ENCODE measurements at regions of chr2 and their contacts with region 1.

Region 1: GRCh38 chr2:102235491-102235890 is 48.7 kb downstream of the IL1RL2 start:
- DNase-seq: no peak
- H3K4me3 ChIP-seq: no peak overlapping the region
- H3K27ac ChIP-seq: no peak overlapping the region
- H3K4me1 ChIP-seq: peaks cover 2% of the 10 kb centered on the region
- H3K27me3 ChIP-seq: no peaks in the 10 kb centered on the region
- CTCF ChIP-seq: peak; percentile 50 to 54

Region 2: DNA sequence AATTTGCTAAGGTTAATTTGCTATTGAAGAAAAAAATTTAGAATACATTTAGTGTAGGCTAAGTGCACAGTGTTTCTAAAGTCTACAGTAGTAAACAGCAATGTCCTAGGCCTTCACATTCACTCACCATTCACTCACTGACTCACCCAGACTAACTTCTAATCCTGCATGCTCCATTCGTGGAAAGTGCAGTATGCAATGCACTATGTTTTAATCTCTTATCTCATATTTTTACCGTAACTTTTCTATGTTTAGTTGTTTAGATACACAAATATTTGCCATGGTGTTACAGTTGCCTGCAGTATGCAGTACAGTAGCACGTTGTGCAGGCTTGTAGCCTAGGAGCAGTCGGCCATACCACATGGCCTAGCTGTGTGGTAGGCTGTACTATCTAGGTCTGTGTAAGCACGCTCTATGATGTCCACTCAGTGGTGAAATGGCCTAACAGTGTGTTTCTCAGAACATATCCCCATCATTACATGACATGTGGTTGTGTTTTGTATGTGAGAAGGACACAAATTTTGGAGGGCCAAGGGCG is 742.5 kb before region 1 on chr2:
- CTCF ChIA-PET with region 1: no interaction called
- dilution Hi-C with region 1: no loop called
- in situ Hi-C with region 1: no loop called
- intact Hi-C with region 1: no loop called
- DNase-seq: no peak
- H3K4me3 ChIP-seq: no peak overlapping the region
- H3K27ac ChIP-seq: no peak overlapping the region
- H3K4me1 ChIP-seq: no peaks in the 10 kb centered on the region
- H3K27me3 ChIP-seq: no peaks in the 10 kb centered on the region
- CTCF ChIP-seq: no peak

Region 3: DNA sequence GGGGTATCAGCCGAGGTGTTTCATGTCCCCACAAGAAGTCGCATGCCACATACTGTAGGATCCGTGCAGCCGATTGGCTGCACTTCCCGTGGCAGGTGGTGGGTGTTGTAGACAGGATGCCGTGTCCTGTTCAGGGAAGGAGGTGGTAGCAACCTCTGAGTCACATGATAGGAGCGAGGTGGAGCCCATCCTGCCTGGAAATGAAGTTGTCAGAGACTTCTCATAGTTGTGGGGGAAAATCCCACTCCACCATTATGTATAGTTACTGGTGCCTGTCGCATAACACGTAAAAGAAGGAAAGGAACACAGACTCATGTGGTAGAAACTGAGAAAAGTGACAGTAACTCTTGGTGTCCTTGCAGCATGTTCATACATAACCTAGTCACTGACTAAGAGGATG is 335.1 kb before region 1 on chr2:
- CTCF ChIA-PET with region 1: no interaction called
- dilution Hi-C with region 1: loop called (anchors 5 kb)
- in situ Hi-C with region 1: no loop called
- intact Hi-C with region 1: no loop called
- DNase-seq: no peak
- H3K4me3 ChIP-seq: no peak overlapping the region
- H3K27ac ChIP-seq: peak overlapping the region; percentile 60
- H3K4me1 ChIP-seq: peaks cover 28% of the 10 kb centered on the region
- H3K27me3 ChIP-seq: no peaks in the 10 kb centered on the region
- CTCF ChIP-seq: no peak

Region 4: DNA sequence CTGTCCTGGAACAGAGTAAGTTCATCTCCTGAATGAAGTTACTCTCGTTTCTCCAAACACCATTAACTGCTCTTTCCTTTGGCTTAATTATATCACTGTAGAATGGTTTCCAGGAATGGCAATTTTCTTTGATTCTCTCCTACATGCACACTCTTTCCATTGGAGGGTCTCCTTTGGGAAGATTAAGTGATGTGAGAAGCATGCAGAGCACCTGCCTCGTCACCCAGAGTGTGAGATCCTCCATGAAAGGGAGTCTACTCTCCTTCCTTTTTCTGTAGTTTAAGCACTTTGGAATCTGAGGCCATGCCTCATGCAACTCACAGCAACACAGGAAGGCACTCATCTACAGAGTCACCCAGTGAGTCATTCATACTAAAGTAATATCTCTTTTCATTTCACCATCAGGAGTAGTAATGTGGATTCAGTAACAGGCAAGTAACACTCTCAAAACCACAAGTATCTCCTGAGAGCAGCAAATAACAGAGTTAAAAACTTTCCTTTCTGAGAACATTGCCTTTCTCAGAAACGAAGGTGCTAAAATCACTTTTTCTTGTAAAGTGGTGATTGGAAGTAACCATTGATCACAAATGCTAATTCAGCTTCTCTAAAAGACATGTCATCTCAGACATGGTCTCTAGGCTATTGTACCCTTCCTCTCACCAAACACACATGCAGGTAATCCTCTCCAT is 23.0 kb after region 1 on chr2:
- CTCF ChIA-PET with region 1: no interaction called
- dilution Hi-C with region 1: no loop called
- in situ Hi-C with region 1: no loop called
- intact Hi-C with region 1: no loop called
- DNase-seq: peak; percentile 92
- H3K4me3 ChIP-seq: no peak overlapping the region
- H3K27ac ChIP-seq: peak overlapping the region; percentile 49
- H3K4me1 ChIP-seq: peaks cover 11% of the 10 kb centered on the region
- H3K27me3 ChIP-seq: no peaks in the 10 kb centered on the region
- CTCF ChIP-seq: no peak

Region 5: GRCh38 chr2:102449370-102449974 is 214.0 kb after region 1 on chr2:
- CTCF ChIA-PET with region 1: interaction called, 21 read pairs
- dilution Hi-C with region 1: no loop called
- in situ Hi-C with region 1: loop called in 1 of 2 experiments (anchors 10 kb)
- intact Hi-C with region 1: loop called (anchors 1 kb)
- DNase-seq: peak; percentile 28
- H3K4me3 ChIP-seq: no peak overlapping the region
- H3K27ac ChIP-seq: no peak overlapping the region
- H3K4me1 ChIP-seq: no peaks in the 10 kb centered on the region
- H3K27me3 ChIP-seq: no peaks in the 10 kb centered on the region
- CTCF ChIP-seq: peak; percentile 57 to 68

Measured in mammary epithelial cell (primary cell).